ENCODE measurements at regions of chr16 and their contacts with region 1.

Region 1: DNA sequence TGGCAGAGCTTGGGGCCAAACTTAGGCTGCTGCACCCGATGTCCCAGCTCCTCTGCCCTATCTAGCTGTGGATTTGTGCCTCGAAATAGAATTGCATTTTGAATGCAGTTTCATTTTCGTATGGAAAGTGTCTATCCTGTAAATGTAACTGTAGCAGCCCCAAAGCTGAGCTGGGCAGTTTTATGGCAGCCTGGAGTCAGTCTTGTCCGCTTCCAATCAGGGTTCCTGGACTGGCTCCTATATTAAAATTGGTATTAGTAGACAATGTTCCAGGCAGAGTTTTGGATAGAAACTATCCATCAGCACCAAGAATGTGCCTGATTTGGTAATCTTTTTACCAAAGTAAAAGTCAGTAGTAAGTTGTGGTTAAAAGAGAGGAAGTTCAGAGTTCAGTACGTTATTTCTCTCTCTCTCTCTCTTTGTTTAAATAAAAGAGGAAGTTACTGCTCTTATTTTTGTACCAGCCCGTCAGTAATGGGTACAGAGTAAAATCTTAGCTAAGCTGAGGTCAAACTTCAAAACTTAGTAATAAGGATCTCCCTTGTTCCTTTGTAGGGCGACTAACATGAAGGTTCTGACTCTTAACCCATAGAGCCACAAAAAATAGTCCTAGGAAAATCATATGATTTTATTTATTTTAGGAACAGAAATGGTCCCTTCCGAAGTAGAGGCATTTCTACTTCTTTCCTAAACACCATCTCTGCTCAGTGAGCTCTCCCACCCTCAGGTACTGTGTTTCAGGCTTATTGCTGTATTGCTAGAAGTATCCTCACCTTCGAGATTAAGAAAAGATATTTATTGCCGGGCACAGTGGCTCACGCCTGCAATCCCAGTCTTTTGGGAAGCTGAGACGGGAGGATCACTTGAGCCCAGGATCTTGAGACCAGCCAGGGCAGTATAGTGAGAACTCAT is 28.0 kb downstream of the PRKCB start:
- DNase-seq: no peak
- ATAC-seq: peak; percentile 85
- H3K4me3 ChIP-seq: peak overlapping the region; percentile 55
- H3K27ac ChIP-seq: peak overlapping the region; percentile 98
- H3K4me1 ChIP-seq: peaks cover 62% of the 10 kb centered on the region
- H3K27me3 ChIP-seq: no peaks in the 10 kb centered on the region
- CTCF ChIP-seq: no peak
- EP300 ChIP-seq: peak; percentile 85 to 95
- POLR2A ChIP-seq: 0 out of 2 replicates have a peak, but pooled peaks have one; percentile 22
- RAD21 ChIP-seq: no peak

Region 2: GRCh38 chr16:23781177-23781576 is 82.6 kb before region 1 on chr16:
- CTCF ChIA-PET with region 1: no interaction called
- POLR2A ChIA-PET with region 1: no interaction called
- RAD21 ChIA-PET with region 1: no interaction called
- SMC1A ChIA-PET with region 1: no interaction called
- in situ Hi-C with region 1: no loop called
- intact Hi-C with region 1: no loop called
- DNase-seq: no peak
- ATAC-seq: no peak
- H3K4me3 ChIP-seq: no peak overlapping the region
- H3K27ac ChIP-seq: no peak overlapping the region
- H3K4me1 ChIP-seq: no peaks in the 10 kb centered on the region
- H3K27me3 ChIP-seq: no peaks in the 10 kb centered on the region; a peak in 1 of 4 replicates
- CTCF ChIP-seq: no peak
- EP300 ChIP-seq: no peak
- POLR2A ChIP-seq: no peak
- RAD21 ChIP-seq: no peak

Region 3: DNA sequence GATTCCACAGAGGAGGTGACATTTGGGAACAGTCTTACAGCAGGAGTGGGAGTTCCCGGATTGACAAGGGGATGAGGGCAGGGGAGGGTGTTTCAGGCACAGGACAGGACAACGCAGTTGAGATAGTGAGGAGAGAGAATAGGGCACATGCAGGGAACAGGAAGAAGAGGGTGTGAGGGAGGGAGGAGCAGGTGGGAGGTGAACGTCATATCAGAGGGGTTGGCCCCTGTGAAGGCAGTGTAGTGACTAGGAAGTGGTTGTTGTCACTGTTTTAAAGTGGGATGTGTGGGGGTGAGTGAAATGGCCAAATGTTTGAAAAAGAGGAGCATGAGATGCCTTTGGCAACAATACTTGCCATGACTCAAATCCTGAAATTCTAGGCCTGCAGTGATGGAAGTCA is 15.8 kb before region 1 on chr16:
- CTCF ChIA-PET with region 1: interaction called, 134 read pairs
- POLR2A ChIA-PET with region 1: interaction called, 79 read pairs
- RAD21 ChIA-PET with region 1: interaction called, 177 read pairs
- SMC1A ChIA-PET with region 1: interaction called, 468 read pairs
- in situ Hi-C with region 1: no loop called
- intact Hi-C with region 1: no loop called
- DNase-seq: no peak
- ATAC-seq: peak; percentile 60
- H3K4me3 ChIP-seq: no peak overlapping the region; the same call in 1 of the 2 replicates
- H3K27ac ChIP-seq: peak overlapping the region; percentile 52
- H3K4me1 ChIP-seq: peaks cover 59% of the 10 kb centered on the region
- H3K27me3 ChIP-seq: no peaks in the 10 kb centered on the region
- CTCF ChIP-seq: no peak
- EP300 ChIP-seq: no peak
- POLR2A ChIP-seq: no peak
- RAD21 ChIP-seq: no peak

Region 4: DNA sequence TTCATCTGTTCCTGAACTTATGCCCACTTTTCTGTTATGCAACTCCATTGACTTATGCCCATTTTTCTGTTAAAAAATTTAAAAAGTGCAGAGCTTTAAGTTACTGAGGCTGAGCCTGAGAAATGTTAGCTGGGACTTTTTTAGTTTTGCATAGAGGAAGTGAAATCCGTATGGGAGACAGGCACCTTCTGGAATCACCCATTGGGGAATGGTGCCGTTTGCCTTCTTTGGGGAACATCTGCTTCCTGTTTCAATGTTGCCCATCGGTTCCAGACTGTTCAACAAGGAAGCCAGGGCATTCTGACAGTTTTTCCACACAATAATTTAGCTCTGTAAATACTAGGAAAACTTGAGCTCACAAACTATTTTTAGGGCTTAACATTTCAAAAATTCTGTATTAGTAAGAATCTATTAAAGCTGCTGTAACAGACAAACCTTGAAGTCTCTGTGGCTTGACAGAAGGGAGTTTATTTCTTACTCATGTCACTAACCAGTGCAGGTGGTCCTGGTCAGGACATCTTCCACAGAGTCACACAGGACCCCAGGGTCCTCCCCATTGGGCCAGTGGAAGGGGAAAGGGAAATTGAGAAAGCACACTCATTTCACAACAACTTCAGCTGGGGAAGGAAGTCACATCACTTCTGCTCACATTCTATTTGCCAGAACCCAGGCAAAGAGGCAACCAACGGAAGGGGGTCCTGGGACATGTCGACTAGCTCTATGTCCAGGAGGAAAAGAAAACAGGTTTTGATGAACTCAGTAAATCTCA is 10.8 kb before region 1 on chr16:
- CTCF ChIA-PET with region 1: interaction called, 17 read pairs
- POLR2A ChIA-PET with region 1: interaction called, 46 read pairs
- RAD21 ChIA-PET with region 1: interaction called, 31 read pairs
- SMC1A ChIA-PET with region 1: interaction called, 468 read pairs
- in situ Hi-C with region 1: no loop called
- intact Hi-C with region 1: no loop called
- DNase-seq: no peak
- ATAC-seq: peak; percentile 15
- H3K4me3 ChIP-seq: peak overlapping the region; percentile 30; the same call in 1 of the 2 replicates
- H3K27ac ChIP-seq: peak overlapping the region; percentile 87
- H3K4me1 ChIP-seq: peaks cover 71% of the 10 kb centered on the region
- H3K27me3 ChIP-seq: no peaks in the 10 kb centered on the region
- CTCF ChIP-seq: no peak
- EP300 ChIP-seq: no peak
- POLR2A ChIP-seq: no peak
- RAD21 ChIP-seq: 0 out of 2 replicates have a peak, but pooled peaks have one; percentile 17

Region 5: DNA sequence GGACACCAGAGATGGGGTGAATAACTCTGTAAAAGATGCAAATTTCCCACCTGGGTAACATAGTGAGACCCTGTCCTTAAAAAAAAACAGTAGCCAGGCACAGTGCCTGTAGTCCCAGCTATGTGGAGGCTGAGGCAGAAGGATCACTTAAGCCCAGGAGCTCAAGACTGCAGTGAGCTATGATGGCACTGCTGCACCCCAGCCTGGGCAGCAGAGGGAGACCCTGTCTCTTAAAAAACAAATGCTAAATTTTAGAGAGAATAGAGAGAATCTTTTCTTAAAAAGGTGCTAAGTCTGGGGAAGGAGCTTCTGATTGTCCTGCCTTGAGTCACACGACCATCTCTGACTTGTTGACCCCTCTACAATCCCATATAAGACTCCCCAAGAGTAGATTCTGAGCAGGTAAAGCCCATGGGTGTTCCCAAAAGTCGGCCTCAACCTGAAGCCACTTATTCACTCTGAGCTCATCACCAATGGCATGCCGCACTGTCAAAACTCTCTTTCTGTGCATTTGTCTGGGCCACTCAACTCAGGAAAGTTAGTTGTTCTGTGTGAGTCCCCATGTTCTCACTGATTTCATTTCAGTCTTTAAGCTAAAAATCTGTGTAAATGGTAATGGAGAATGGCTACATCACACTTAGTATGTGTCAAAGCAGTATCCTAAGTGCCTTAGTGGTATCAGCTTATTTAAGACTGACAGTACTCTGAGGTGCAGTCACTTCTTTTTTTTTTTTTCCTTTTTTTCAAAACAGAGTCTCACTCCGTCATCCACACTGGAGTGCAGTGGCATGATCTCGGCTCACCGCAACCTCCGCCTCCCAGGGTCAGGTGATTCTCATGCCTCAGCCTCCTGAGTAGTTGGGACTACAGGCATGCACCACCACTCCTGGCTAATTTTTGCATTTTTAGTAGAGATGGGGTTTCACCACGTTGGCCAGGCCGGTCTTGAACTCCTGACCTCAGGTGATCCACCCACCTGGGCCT is 13.6 kb after region 1 on chr16:
- CTCF ChIA-PET with region 1: interaction called, 17 read pairs
- POLR2A ChIA-PET with region 1: interaction called, 32 read pairs
- RAD21 ChIA-PET with region 1: interaction called, 38 read pairs
- SMC1A ChIA-PET with region 1: interaction called, 468 read pairs
- in situ Hi-C with region 1: no loop called
- intact Hi-C with region 1: no loop called
- DNase-seq: no peak
- ATAC-seq: no peak; the same call in 2 of the 3 replicates
- H3K4me3 ChIP-seq: no peak overlapping the region
- H3K27ac ChIP-seq: peak overlapping the region; percentile 69
- H3K4me1 ChIP-seq: peaks cover 63% of the 10 kb centered on the region
- H3K27me3 ChIP-seq: no peaks in the 10 kb centered on the region
- CTCF ChIP-seq: peak; percentile 23 to 28 (median 27); a peak in 2 of 6 replicates
- EP300 ChIP-seq: no peak
- POLR2A ChIP-seq: no peak
- RAD21 ChIP-seq: peak; percentile 53

Region 6: DNA sequence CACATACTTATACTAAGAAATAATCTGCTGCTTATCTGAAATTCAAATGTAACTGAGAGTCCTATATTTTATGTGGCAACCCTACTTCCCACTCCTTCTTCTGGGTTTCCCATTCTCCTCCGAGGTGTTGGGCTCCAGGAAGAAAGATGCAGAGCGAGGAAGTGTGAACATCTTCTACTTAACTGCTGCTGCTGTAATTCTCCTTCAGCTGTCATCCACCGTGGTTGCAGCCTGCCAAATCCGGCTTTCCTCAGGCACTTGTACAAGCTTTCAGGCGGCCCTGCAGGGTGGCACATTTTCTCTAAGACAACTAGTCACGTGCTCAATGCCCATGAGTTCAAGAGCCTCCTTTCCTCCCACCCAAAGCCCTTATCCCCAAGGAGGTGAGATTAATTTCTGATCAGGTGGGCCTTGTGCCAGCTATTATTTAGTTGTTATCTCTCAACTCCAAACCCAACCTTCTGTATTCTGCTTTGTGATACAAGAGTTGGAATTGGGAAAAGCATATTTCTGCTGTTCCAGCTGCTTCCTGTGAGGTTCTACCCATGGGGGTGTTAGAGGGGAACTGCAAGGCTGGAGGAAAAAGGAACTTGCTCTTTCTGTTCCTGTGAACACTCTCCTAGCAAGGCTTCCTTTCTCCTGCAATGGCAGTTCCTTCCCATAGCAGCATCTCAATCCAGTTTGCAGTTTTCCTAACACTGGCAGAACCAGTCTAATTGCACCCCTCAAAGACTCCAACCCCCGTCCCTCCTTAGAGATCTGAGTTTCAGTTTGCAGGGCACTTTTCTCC is 608.0 kb after region 1 on chr16:
- CTCF ChIA-PET with region 1: no interaction called
- POLR2A ChIA-PET with region 1: no interaction called
- RAD21 ChIA-PET with region 1: no interaction called
- SMC1A ChIA-PET with region 1: no interaction called
- in situ Hi-C with region 1: no loop called
- intact Hi-C with region 1: no loop called
- DNase-seq: no peak
- ATAC-seq: no peak
- H3K4me3 ChIP-seq: no peak overlapping the region
- H3K27ac ChIP-seq: no peak overlapping the region
- H3K4me1 ChIP-seq: no peaks in the 10 kb centered on the region
- H3K27me3 ChIP-seq: peaks cover 0 to 1% of the 10 kb centered on the region in 2 experiments; a peak in 1 of 4 replicates
- CTCF ChIP-seq: no peak
- EP300 ChIP-seq: no peak
- POLR2A ChIP-seq: no peak
- RAD21 ChIP-seq: no peak

Region 7: GRCh38 chr16:25031441-25032307 is 1167.9 kb after region 1 on chr16:
- CTCF ChIA-PET with region 1: no interaction called
- POLR2A ChIA-PET with region 1: no interaction called
- RAD21 ChIA-PET with region 1: no interaction called
- SMC1A ChIA-PET with region 1: no interaction called
- in situ Hi-C with region 1: loop called (anchors 25 kb)
- intact Hi-C with region 1: no loop called
- DNase-seq: peak; percentile 96
- ATAC-seq: peak; percentile 98
- H3K4me3 ChIP-seq: peak overlapping the region; percentile 98
- H3K27ac ChIP-seq: peak overlapping the region; percentile 91
- H3K4me1 ChIP-seq: peaks cover 16% of the 10 kb centered on the region
- H3K27me3 ChIP-seq: no peaks in the 10 kb centered on the region
- CTCF ChIP-seq: no peak
- EP300 ChIP-seq: no peak
- POLR2A ChIP-seq: peak; percentile 85
- RAD21 ChIP-seq: no peak

Measured in GM12878 (cell line).